Mammary epithelial cell (primary cell): ENCODE measurements at regions of chr17 and their contacts with region 1.

Region 1: DNA sequence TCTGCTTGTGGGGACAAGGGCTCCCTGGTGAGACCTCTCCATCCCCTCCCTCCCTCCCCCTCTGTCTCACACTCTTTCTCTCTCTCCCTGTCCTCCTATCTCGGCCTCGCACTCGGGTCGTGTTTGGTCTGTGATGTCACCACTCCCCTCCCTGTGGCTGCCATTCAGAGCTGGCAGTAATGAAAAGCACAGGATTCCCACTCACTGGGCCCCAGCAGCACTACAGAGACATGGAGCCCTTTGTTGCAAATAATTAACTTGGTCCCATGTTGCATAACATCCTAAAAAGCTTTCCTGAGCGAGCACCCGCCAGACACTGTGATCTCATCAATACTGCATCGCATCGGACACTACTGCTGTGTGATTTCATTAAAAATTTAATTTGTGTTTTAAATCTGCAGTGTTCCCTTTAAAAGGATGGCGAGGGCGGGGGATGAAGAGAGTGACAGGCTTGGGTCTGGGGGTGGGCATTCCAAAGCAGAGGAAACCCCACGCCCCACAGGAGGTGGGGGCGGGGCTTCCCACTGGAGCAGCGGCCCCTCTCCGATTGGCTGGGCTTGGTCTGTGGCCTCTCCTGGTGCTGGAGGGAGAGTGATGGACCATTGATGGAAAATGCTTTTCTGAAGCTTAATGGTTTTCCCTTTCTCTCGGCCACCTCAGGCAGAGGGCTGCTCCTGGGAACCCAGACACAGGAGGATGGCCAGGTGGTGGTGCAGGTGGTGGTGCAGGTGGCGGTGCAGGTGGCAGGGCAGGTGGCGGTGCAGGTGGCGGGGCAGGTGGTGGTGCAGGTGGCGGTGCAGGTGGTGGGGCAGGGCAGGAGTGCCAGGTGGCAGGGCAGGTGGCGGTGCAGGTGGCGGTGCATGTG is 15.3 kb upstream of the NPTX1 start:
- DNase-seq: no peak
- H3K4me3 ChIP-seq: no peak overlapping the region
- H3K27ac ChIP-seq: no peak overlapping the region
- H3K4me1 ChIP-seq: no peaks in the 10 kb centered on the region
- H3K27me3 ChIP-seq: peaks cover 3% of the 10 kb centered on the region
- CTCF ChIP-seq: no peak

Region 2: GRCh38 chr17:80177986-80178590 is 313.6 kb before region 1 on chr17:
- CTCF ChIA-PET with region 1: no interaction called
- dilution Hi-C with region 1: no loop called
- in situ Hi-C with region 1: no loop called
- intact Hi-C with region 1: no loop called
- DNase-seq: no peak
- H3K4me3 ChIP-seq: no peak overlapping the region
- H3K27ac ChIP-seq: no peak overlapping the region
- H3K4me1 ChIP-seq: peaks cover 5% of the 10 kb centered on the region
- H3K27me3 ChIP-seq: peaks cover 2% of the 10 kb centered on the region
- CTCF ChIP-seq: no peak

Region 3: GRCh38 chr17:80414803-80415625 is 76.7 kb before region 1 on chr17 and contains the start of gene ENDOV:
- CTCF ChIA-PET with region 1: no interaction called
- dilution Hi-C with region 1: no loop called
- in situ Hi-C with region 1: no loop called
- intact Hi-C with region 1: no loop called
- DNase-seq: peak; percentile 92
- H3K4me3 ChIP-seq: peak within 1 kb of the TSS; percentile 66 to 90 (median 69)
- H3K27ac ChIP-seq: peak within 1 kb of the TSS; percentile 96
- H3K4me1 ChIP-seq: peaks cover 14% of the 10 kb centered on the region
- H3K27me3 ChIP-seq: no peaks in the 10 kb centered on the region
- CTCF ChIP-seq: no peak
- total RNA-seq, gene ENDOV: 19.5 to 22.6 TPM

Region 4: GRCh38 chr17:80439499-80439898 is 52.2 kb before region 1 on chr17:
- CTCF ChIA-PET with region 1: no interaction called
- dilution Hi-C with region 1: loop called (anchors 5 kb)
- in situ Hi-C with region 1: no loop called
- intact Hi-C with region 1: no loop called
- DNase-seq: no peak
- H3K4me3 ChIP-seq: no peak overlapping the region
- H3K27ac ChIP-seq: no peak overlapping the region
- H3K4me1 ChIP-seq: no peaks in the 10 kb centered on the region
- H3K27me3 ChIP-seq: no peaks in the 10 kb centered on the region
- CTCF ChIP-seq: no peak

Region 5: DNA sequence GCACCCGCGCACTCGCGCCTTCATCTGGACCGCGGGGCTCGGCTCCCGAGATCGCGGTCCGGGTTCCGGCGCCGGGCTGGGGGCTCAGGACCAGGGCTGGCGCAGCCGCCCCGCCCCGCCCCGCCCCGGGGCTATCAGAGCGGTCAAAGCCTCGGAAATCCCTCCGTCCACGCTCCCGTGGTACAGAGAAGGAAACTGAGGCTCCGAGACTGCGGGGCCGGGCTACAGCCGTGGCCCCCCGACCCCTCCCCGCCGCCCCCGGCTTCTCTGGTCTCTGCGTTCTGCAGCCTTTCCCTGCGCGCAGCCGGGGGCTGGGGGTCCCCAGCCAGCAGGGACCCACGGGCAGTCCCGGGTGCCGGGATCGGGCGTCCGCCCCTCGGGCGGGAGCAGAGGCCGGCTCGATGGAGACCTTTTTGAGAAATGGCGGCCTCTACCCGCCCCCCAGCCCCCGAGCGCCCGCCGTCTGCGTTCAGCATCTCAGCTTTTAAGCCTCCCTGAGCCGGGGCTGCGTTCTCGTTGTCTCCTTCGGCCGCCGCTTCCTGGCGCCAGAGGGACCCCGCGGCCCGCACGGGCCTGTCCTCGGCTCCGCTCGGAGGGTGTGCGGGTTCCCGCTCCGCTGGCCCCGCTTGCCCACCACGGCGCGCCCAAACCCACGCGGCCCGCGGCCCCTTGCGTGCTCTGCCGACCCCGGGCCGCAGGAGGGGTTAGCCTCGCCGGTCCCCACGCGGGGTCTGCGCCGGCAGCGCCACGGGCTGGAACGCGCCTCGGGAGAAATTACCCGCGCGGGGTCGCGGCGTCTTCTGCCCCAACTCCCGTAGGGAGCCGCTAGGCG is 13.8 kb before region 1 on chr17:
- CTCF ChIA-PET with region 1: no interaction called
- dilution Hi-C with region 1: no loop called
- in situ Hi-C with region 1: no loop called
- intact Hi-C with region 1: no loop called
- DNase-seq: peak; percentile 35
- H3K4me3 ChIP-seq: peak overlapping the region in 2 of 3 experiments; percentile 30
- H3K27ac ChIP-seq: no peak overlapping the region
- H3K4me1 ChIP-seq: peaks cover 33% of the 10 kb centered on the region
- H3K27me3 ChIP-seq: peaks cover 57% of the 10 kb centered on the region
- CTCF ChIP-seq: peak; percentile 18 to 61

Region 6: DNA sequence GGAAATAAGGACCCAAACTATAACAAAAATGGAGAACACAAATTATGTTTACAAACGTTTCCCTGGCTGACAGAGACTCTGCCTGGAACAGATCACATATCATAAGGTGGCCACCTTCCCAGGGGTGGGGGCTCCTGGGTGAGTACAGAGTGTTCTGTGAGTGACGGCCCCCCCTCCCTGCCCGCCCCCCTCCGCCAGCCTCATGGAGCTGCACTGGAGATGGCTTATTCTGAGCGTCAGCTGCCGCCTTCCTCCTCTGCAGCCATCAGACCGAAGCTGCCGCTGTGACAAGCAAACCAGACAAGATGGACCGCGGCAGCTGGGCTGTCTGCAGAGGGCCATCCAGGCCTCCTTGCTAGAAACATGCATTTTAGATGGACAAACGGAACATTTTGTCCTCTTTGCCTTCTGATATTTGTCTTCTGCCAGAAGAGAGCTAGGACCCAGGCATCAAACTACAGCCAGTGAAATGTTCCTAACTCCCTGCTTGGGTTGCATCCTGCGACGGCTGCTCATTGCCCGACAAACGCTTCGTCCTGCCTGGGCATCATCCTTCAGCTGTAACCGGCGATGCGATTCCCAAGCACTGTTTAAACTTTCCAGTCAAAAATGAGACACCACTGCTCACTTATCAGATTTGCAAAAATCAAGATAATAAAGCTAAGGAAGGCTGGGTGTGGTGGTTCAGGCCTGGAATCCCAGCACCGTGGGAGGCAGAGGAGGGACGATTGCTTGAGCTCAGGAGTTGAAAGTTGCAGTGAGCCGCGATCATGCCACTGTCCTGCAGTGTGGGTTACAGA is 37.6 kb after region 1 on chr17:
- CTCF ChIA-PET with region 1: no interaction called
- dilution Hi-C with region 1: loop called (anchors 5 kb)
- in situ Hi-C with region 1: no loop called
- intact Hi-C with region 1: no loop called
- DNase-seq: no peak
- H3K4me3 ChIP-seq: no peak overlapping the region
- H3K27ac ChIP-seq: no peak overlapping the region
- H3K4me1 ChIP-seq: peaks cover 8% of the 10 kb centered on the region
- H3K27me3 ChIP-seq: no peaks in the 10 kb centered on the region
- CTCF ChIP-seq: no peak

Region 7: DNA sequence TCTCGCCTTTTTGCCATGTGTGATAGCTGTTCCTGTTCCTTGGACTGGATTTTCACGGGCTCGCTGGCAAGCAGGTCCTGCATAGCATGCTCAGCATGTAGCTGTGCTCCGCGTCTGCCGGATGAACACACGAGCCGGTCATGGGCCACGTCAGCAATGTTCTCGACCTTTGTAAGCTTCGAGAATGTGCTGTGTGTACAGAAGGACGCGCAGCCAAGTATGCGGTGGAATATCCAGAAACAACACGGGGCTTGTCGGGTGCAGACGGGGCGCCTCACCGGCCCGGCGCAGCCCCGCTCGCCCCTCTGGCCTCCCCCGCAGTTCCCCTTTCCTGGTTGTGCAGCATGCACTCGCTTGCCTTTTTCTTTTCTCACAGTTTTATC is 95.1 kb after region 1 on chr17:
- CTCF ChIA-PET with region 1: no interaction called
- dilution Hi-C with region 1: loop called (anchors 5 kb)
- in situ Hi-C with region 1: no loop called
- intact Hi-C with region 1: no loop called
- DNase-seq: no peak
- H3K4me3 ChIP-seq: no peak overlapping the region
- H3K27ac ChIP-seq: no peak overlapping the region
- H3K4me1 ChIP-seq: no peaks in the 10 kb centered on the region
- H3K27me3 ChIP-seq: no peaks in the 10 kb centered on the region
- CTCF ChIP-seq: no peak